ENCODE measurements at regions of chr1 and their contacts with region 1.

Region 1: GRCh38 chr1:31831397-31832378 is 15.9 kb upstream of the SPOCD1 start:
- DNase-seq: no peak
- ATAC-seq: no peak
- H3K4me3 ChIP-seq: no peak overlapping the region
- H3K4me3 Mint-ChIP-seq: no peak overlapping the region
- H3K27ac ChIP-seq: no peak overlapping the region
- H3K27ac Mint-ChIP-seq: no peak overlapping the region
- H3K4me1 ChIP-seq: peaks cover 35% of the 10 kb centered on the region
- H3K4me1 Mint-ChIP-seq: peaks cover 44% of the 10 kb centered on the region
- H3K27me3 ChIP-seq: no peaks in the 10 kb centered on the region
- H3K27me3 Mint-ChIP-seq: no peaks in the 10 kb centered on the region
- CTCF ChIP-seq: no peak

Region 2: GRCh38 chr1:31848381-31848897 is 16.8 kb after region 1 on chr1:
- CTCF ChIA-PET with region 1: interaction called, 4 read pairs
- POLR2A ChIA-PET with region 1: interaction called, 20 read pairs
- intact Hi-C with region 1: no loop called
- DNase-seq: peak; percentile 24 to 77 (median 45)
- ATAC-seq: peak; percentile 80
- H3K4me3 ChIP-seq: peak overlapping the region; percentile 12
- H3K4me3 Mint-ChIP-seq: peak overlapping the region; percentile 54
- H3K27ac ChIP-seq: peak overlapping the region; percentile 33 to 55
- H3K27ac Mint-ChIP-seq: peak overlapping the region; percentile 78
- H3K4me1 ChIP-seq: peaks cover 38% of the 10 kb centered on the region
- H3K4me1 Mint-ChIP-seq: peaks cover 68% of the 10 kb centered on the region
- H3K27me3 ChIP-seq: no peaks in the 10 kb centered on the region
- H3K27me3 Mint-ChIP-seq: no peaks in the 10 kb centered on the region
- CTCF ChIP-seq: no peak

Region 3: GRCh38 chr1:31860581-31860980 is 28.9 kb after region 1 on chr1:
- CTCF ChIA-PET with region 1: no interaction called
- POLR2A ChIA-PET with region 1: no interaction called
- intact Hi-C with region 1: no loop called
- DNase-seq: no peak
- ATAC-seq: no peak
- H3K4me3 ChIP-seq: no peak overlapping the region
- H3K4me3 Mint-ChIP-seq: no peak overlapping the region
- H3K27ac ChIP-seq: no peak overlapping the region
- H3K27ac Mint-ChIP-seq: no peak overlapping the region
- H3K4me1 ChIP-seq: peaks cover 9% of the 10 kb centered on the region
- H3K4me1 Mint-ChIP-seq: no peaks in the 10 kb centered on the region
- H3K27me3 ChIP-seq: no peaks in the 10 kb centered on the region
- H3K27me3 Mint-ChIP-seq: no peaks in the 10 kb centered on the region
- CTCF ChIP-seq: no peak

Measured in CD4-positive, alpha-beta T cell (primary cell).